A673 (cell line): ENCODE measurements at regions of chr2 and their contacts with region 1.

Region 1: DNA sequence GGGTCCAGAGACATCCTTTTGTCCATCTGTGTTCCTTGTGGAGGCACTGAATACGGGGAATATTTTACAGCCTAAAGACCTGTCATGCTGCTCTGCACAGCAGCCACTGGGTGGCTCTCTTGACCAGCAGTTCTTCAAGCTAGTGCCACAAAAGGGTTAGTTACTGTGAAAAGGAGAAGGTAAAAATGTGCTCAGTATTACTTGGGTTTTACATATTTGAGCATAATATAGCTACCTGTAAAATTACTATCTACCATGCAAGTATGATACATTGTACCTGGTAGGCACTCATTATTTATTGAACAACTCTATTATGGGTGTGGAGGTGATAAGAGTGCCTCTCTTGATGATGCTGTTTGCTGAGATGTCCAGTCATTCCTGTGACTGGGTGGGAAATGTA is 23.6 kb downstream of the FZD5 start:
- DNase-seq: peak; percentile 72
- H3K4me3 ChIP-seq: no peak overlapping the region
- H3K27ac ChIP-seq: no peak overlapping the region
- H3K4me1 ChIP-seq: no peaks in the 10 kb centered on the region
- H3K27me3 ChIP-seq: no peaks in the 10 kb centered on the region
- CTCF ChIP-seq: peak; percentile 94

Region 2: GRCh38 chr2:207974216-207974605 is 228.1 kb after region 1 on chr2:
- CTCF ChIA-PET with region 1: interaction called, 4 read pairs
- POLR2A ChIA-PET with region 1: no interaction called
- intact Hi-C with region 1: loop called (anchors 2 kb)
- DNase-seq: no peak
- H3K4me3 ChIP-seq: no peak overlapping the region
- H3K27ac ChIP-seq: no peak overlapping the region
- H3K4me1 ChIP-seq: peaks cover 11% of the 10 kb centered on the region
- H3K27me3 ChIP-seq: no peaks in the 10 kb centered on the region
- CTCF ChIP-seq: no peak

Region 3: DNA sequence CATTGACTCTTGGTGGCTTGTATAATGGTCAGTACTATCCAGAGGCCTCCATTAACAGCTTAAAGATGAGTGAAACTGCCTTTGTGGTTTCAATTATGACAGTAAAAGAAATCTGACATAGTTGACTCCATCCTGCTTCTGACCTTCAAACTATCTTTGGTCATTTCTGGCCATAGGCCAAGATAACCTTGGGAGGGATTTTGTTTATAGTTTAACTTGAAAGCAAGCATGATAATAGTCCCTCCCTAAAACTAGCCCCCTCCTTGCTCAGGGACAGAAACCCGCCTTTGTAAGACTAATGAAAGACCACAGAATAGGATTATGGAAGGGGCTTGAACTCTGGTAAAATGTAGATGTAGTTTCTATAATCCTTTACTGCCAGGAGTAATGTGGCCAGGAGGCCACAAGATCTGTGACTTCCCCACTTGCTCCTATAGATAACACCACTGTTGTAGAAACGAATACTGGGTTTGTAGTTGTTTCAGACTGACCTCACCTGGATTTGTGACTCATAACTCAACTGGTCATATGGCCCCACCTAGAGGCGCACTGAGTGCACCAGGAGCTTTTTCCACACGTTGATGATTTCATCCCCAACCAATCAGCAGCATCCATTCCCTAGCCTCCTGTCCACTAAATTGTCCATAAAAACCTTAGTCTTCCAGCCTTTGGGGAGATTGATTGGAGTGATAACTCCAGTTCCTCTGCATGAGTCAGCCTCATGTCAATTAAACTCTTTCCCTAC is 287.8 kb after region 1 on chr2:
- CTCF ChIA-PET with region 1: interaction called, 10 read pairs
- POLR2A ChIA-PET with region 1: no interaction called
- intact Hi-C with region 1: no loop called
- DNase-seq: peak; percentile 26
- H3K4me3 ChIP-seq: no peak overlapping the region
- H3K27ac ChIP-seq: no peak overlapping the region
- H3K4me1 ChIP-seq: no peaks in the 10 kb centered on the region
- H3K27me3 ChIP-seq: no peaks in the 10 kb centered on the region
- CTCF ChIP-seq: peak; percentile 48

Region 4: DNA sequence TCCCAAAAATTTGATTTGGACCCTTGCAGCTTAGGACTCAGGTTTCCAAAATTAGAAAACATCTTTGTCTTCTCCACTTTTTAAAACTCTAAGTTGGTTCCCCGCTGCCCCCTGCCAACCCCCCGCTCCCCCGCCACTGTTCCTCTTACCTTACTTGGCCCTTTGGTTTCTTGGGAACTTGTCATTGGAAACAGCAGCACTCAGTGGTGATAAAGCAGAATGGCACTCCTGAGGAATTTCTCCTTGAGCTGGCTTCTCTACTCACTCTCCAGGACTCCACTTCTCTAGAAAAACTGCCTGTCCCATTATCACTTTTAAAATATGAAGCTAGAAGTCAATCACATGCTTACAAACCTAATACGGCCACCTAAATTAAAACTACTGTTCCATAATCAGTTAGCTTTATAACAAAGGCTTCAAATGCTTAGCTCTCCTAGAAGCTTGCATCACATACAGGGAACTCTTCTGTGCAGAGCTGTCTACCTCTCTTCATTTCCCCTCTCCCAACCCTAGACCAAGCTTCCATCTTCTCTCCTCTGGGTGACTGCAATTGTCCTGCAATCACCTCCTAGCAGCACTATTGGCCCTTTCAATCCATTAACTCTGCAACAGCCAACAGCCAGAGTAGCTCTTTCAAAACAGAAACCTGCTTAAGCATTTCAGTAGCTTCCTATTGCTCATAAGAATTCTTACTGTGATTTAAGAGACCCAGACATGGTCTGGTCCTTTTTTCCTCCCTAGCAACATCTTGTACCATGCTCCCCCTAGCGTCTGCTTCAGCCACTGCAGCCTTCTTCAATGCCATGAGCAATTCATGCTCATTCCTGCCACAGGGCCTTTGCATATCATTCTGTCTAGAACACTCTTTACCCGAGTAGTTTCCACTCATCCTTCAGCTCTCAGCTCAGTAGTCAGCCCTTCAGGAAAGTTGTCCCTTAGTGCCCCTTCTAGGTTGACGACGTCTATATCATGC is 294.4 kb after region 1 on chr2:
- CTCF ChIA-PET with region 1: interaction called, 22 read pairs
- POLR2A ChIA-PET with region 1: no interaction called
- intact Hi-C with region 1: loop called (anchors 1 kb)
- DNase-seq: peak; percentile 70
- H3K4me3 ChIP-seq: no peak overlapping the region
- H3K27ac ChIP-seq: no peak overlapping the region
- H3K4me1 ChIP-seq: no peaks in the 10 kb centered on the region
- H3K27me3 ChIP-seq: no peaks in the 10 kb centered on the region
- CTCF ChIP-seq: peak; percentile 69

Region 5: DNA sequence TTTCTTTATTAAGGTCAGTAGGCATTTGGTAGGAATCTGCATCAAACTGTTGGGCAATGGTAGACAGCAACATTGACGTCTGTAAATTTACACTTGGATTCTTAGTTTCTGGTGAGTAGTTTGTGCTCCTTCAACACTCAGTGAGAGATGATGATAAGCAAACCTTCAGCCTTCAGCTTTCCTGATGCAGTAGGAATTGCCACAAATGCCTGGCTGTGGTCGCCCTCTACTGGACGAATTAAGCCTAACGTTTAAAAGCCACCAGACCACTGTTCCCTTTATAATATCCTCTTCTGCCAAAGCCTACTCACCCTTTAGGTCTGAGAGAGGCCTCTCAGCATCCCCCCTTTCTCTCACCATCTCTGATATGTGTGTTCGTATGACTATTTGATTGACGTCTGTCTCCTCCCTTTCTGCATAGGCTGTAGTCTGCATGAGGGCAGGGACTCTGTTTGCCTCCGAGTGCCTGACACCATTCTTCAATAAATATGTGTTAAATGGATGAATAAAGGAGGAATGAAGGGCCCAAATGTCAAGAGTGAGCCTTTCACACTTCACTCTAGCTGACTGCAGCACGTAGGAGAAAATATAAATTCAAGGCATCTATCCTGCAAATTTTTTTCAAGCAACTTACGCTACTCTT is 326.2 kb after region 1 on chr2:
- CTCF ChIA-PET with region 1: interaction called, 5 read pairs
- POLR2A ChIA-PET with region 1: no interaction called
- intact Hi-C with region 1: loop called (anchors 1 kb)
- DNase-seq: peak; percentile 60
- H3K4me3 ChIP-seq: no peak overlapping the region
- H3K27ac ChIP-seq: no peak overlapping the region
- H3K4me1 ChIP-seq: peaks cover 4% of the 10 kb centered on the region
- H3K27me3 ChIP-seq: no peaks in the 10 kb centered on the region
- CTCF ChIP-seq: peak; percentile 84

Region 6: GRCh38 chr2:208254871-208255556 is 508.9 kb after region 1 on chr2 and contains the start of gene IDH1:
- CTCF ChIA-PET with region 1: no interaction called
- POLR2A ChIA-PET with region 1: no interaction called
- intact Hi-C with region 1: loop called (anchors 10 kb)
- DNase-seq: peak; percentile 95
- H3K4me3 ChIP-seq: peak within 1 kb of the TSS; percentile 100
- H3K27ac ChIP-seq: peak within 1 kb of the TSS; percentile 84
- H3K4me1 ChIP-seq: peaks cover 10% of the 10 kb centered on the region
- H3K27me3 ChIP-seq: no peaks in the 10 kb centered on the region
- CTCF ChIP-seq: peak; percentile 71
- total RNA-seq, gene IDH1: 191 and 196 TPM in 2 replicates